Head of caudate nucleus (tissue), 42 donors: ENCODE measurements at regions of chr19 and their contacts with region 1.

Region 1: DNA sequence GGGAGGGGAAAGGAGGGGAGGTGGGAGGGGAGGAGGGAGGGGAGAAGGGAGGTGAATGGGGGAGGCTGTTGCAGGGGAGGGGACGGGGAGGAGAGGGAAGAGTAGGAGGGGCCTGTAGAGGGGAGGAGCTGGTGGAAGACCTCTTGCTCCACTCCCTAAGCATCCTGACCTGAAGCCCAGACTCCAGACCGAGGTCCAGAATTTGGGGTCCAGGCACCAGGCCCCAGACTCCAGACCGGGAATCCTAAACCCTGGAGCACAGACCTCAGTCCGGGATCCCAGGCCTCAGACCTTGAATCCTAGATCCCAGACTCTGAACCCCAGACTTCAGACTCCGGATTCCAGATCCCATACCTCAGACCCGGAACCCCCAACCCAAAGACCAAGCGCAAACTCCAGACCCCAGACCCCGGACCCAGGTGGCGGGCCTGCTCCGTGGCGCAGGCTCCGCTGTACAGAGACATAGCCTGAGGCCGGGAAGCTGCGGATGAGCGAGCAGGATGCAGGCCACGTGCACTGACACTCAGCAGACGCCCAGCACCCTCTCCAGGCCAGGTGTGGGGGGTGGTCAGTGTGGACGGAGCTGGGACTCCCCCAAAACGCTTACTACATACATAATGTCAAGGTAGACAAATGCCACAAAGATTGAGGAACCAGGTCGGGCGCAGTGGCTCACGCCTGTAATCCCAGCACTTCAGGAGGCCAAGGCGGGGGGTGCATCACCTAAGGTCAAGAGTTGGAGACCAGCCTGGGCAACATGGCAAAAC is 710 bp upstream of the BTBD2 start:
- DNase-seq: peak; percentile 35 to 91 (median 74)

Region 2: DNA sequence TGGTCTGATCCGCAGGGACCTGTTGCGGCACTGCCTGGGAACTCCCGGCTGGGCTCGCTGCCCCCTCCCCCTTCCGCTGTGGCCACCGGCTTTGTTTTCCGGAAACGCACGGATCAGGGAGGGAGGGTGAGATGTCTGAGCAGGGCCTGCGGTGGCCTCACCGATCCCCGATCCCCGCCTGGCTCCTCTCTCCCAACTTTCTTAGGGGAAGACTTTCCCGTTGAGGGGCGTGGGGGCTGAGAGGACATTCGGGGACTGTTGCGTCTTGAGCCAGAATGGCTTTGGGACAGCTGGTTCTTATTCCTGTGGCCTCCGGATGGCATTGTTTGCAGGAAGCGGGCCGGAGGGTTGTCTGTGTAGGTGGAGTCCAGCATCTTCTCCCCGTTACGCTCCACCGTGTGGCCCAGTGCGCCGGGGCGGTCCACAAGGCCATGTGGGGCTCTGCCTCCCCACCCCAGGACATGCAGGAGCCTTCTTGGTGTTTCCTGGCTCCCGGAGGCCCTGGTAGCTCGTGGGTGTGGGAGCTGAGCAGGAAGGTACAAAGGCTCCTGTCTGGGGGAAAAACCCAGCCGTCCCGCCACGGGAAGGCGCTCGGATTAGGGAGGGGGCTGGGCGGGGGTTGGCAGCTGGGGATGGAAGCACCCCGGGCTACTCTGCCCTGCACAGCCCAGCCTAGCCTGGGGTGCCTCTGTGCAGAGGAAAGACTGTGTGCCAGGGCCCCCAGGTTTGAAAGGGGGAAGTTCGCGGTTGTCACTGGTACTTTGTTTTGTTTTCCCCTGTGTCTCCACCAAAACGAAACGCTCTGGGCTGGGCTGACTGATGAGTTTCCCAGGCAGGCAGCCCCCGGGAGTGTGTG is 73.9 kb before region 1 on chr19:
- intact Hi-C with region 1: no loop called
- DNase-seq: peak in 30 of 42 donors; percentile 13 to 74 (median 54)

Region 3: DNA sequence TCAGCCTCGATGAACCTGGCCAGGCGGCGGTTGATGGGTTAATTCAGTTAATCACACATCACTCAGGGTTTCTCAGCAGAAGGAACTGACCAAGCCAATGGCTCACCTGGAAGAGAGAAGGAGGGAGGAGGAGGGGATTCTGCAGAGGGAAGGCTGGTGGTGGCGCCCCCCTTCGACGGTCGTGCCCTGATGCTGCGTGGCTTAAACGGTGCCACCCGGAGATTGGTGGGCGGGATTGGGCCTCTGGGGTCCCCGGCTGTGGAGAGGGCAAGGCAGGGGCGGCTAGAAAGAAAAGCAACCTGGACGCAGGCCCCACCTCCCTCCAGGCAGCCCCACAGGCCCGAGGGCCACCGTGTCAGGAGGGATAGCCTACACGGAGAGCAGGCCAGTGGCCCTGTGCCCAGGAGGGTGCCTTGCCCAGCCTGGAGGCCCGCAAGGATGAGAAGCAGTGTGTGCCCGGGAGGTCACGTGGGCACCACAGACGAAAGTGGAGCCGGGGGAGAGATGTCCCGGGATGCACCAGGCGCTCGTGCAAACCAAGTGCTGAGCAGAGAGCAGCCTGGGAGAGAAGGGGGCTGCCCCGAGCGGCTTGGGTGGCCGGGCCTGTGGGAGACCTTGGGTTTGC is 59.2 kb before region 1 on chr19:
- intact Hi-C with region 1: loop called (anchors 10 kb)
- DNase-seq: peak; percentile 72 to 95 (median 89)

Region 4: DNA sequence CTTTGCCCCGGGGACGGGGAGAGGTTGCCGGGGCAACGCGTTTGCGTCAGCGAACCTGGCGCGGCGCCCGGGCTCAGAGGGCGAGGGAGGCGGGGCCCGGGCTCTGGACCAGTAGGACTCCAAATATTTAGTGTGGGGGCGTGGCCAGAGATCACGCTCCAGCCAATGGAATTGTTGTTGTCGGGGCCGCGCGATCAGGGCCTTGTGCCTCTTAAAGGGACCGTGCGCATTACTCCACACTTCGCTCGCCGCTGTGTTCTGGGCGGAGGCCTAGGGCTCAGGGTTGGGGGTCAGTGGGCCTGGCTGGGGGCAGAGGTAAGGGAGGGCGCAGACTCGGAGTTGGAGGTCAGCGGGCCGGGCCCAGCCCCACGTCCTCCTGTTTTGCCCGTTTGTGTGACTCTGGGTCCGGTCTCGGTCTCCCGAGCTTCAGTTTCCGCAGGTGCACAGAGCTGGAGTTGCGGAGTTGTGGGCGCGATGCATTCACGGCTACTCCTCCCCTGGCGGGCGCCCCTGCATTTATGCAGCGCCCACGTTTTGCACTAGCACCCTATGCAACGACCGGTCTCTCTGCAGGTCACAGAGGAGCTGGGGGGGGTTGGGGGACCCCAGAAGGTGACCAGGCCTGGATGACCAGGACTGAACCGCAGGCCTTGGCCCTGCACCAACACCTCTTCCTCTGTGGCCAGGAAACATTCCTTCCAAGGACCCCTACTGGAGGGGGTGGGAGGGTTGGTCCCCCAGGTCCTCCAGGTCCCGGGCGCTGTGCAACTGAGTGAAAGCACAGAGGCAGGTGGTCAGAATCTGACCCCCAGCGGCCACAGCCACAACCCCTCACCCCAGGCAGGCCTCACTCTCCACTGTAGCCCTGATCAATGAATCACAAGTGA is 45.5 kb after region 1 on chr19:
- intact Hi-C with region 1: loop called (anchors 5 kb)
- DNase-seq: peak; percentile 98 to 100 (median 99)

Region 5: GRCh38 chr19:2113439-2114211 is 97.4 kb after region 1 on chr19:
- intact Hi-C with region 1: no loop called
- DNase-seq: no peak